IMR-90 (cell line): ENCODE measurements at regions of chr5 and their contacts with region 1.

Region 1: GRCh38 chr5:64301566-64301965 is 135.9 kb downstream of the RNF180 start:
- DNase-seq: no peak
- ATAC-seq: no peak
- H3K4me3 ChIP-seq: no peak overlapping the region
- H3K27ac ChIP-seq: no peak overlapping the region
- H3K4me1 ChIP-seq: no peaks in the 10 kb centered on the region
- H3K27me3 ChIP-seq: no peaks in the 10 kb centered on the region
- CTCF ChIP-seq: no peak
- POLR2A ChIP-seq: no peak
- RAD21 ChIP-seq: no peak

Region 2: GRCh38 chr5:64229163-64229774 is 72.3 kb before region 1 on chr5:
- CTCF ChIA-PET with region 1: no interaction called
- POLR2A ChIA-PET with region 1: no interaction called
- dilution Hi-C with region 1: no loop called
- in situ Hi-C with region 1: no loop called
- intact Hi-C with region 1: no loop called
- DNase-seq: peak; percentile 39
- ATAC-seq: peak; percentile 48; the same call in 1 of the 2 replicates
- H3K4me3 ChIP-seq: no peak overlapping the region
- H3K27ac ChIP-seq: no peak overlapping the region
- H3K4me1 ChIP-seq: no peaks in the 10 kb centered on the region
- H3K27me3 ChIP-seq: no peaks in the 10 kb centered on the region
- CTCF ChIP-seq: peak; percentile 62
- POLR2A ChIP-seq: no peak
- RAD21 ChIP-seq: peak; percentile 51

Region 3: GRCh38 chr5:64318175-64318574 is 16.6 kb after region 1 on chr5:
- CTCF ChIA-PET with region 1: no interaction called
- POLR2A ChIA-PET with region 1: no interaction called
- dilution Hi-C with region 1: no loop called
- in situ Hi-C with region 1: no loop called
- intact Hi-C with region 1: no loop called
- DNase-seq: no peak
- ATAC-seq: no peak
- H3K4me3 ChIP-seq: no peak overlapping the region
- H3K27ac ChIP-seq: no peak overlapping the region
- H3K4me1 ChIP-seq: no peaks in the 10 kb centered on the region
- H3K27me3 ChIP-seq: no peaks in the 10 kb centered on the region
- CTCF ChIP-seq: no peak
- POLR2A ChIP-seq: no peak
- RAD21 ChIP-seq: no peak

Region 4: DNA sequence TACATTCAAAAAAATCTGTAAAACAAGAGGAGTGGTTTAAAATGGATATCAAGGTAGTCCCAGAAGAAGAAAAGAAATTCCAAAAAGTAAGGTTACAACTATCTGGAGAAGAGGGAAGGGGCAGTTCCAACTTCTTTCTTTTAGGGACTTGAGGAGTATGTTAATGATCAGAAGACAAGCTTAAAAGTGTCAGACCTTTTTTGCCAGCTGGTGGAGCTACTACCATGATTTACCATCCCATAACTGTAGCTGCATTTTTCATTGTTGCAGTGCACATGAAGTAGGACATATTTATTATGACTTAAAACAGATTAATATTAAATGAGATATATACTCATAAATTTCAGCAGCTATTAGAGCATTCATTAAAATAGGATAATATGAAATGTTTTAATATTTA is 45.7 kb after region 1 on chr5:
- CTCF ChIA-PET with region 1: no interaction called
- POLR2A ChIA-PET with region 1: interaction called, 10 read pairs
- dilution Hi-C with region 1: no loop called
- in situ Hi-C with region 1: no loop called
- intact Hi-C with region 1: no loop called
- DNase-seq: no peak
- ATAC-seq: no peak
- H3K4me3 ChIP-seq: no peak overlapping the region
- H3K27ac ChIP-seq: no peak overlapping the region
- H3K4me1 ChIP-seq: no peaks in the 10 kb centered on the region
- H3K27me3 ChIP-seq: no peaks in the 10 kb centered on the region
- CTCF ChIP-seq: no peak
- POLR2A ChIP-seq: no peak
- RAD21 ChIP-seq: no peak